ENCODE measurements at regions of chr6 and their contacts with region 1.

Region 1: DNA sequence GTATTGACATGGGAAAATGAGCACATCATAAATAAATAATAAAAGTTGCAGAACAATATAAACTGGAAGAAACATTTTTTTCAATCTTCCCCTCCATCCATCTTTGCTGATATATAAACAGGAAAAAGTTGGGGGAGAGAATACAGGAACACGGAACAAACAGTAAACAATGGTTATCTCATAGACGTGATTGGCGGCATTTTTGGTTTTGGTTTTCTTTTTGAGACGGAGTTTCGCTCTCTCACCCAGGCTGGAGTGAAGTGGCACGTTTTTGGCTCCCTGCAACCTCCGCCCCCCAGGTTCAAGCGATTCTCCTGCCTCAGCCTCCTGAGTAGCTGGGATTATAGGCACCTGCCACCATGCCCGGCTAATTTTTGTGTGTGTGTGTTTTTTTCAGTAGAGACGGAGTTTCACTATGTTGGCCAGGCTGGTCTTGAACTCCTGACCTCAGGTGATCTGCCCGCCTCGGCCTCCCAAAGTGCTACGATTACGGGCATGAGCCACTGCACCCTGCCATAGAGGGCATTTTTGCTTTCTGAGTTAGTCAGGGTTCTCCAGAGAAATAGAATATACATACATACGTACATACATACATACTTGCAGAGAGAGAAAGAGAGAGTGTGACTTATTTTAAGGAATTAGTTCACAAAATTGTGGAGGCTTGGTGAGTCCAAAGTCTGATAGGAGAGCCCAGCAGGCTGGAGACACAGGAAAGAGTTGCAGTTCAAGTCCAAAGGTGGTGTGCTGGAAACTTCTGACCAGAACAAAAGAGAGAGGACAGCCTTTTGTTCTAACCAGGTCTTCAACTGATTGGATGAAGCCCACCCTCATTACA is 22.6 kb downstream of the GNL1 start:
- DNase-seq: no peak
- H3K4me3 ChIP-seq: no peak overlapping the region
- H3K27me3 ChIP-seq: no peaks in the 10 kb centered on the region
- CTCF ChIP-seq: no peak

Region 2: DNA sequence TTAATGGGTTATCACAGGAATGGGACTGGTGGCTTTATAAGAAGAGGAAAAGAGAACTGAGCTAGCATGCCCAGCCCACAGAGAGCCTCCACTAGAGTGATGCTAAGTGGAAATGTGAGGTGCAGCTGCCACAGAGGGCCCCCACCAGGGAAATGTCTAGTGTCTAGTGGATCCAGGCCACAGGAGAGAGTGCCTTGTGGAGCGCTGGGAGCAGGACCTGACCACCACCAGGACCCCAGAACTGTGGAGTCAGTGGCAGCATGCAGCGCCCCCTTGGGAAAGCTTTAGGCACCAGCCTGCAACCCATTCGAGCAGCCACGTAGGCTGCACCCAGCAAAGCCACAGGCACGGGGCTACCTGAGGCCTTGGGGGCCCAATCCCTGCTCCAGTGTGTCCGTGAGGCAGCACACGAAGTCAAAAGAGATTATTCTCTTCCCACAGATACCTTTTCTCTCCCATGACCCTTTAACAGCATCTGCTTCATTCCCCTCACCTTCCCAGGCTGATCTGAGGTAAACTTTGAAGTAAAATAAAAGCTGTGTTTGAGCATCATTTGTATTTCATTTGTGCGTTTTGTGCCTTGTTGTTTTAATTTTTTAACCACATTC is 39.9 kb before region 1 on chr6:
- CTCF ChIA-PET with region 1: interaction called, 13 read pairs
- POLR2A ChIA-PET with region 1: no interaction called
- DNase-seq: no peak
- H3K4me3 ChIP-seq: no peak overlapping the region
- H3K27me3 ChIP-seq: no peaks in the 10 kb centered on the region
- CTCF ChIP-seq: peak; percentile 27

Region 3: GRCh38 chr6:30500421-30501355 is 33.0 kb before region 1 on chr6:
- CTCF ChIA-PET with region 1: interaction called, 11 read pairs
- POLR2A ChIA-PET with region 1: no interaction called
- DNase-seq: no peak
- H3K4me3 ChIP-seq: no peak overlapping the region
- H3K27me3 ChIP-seq: no peaks in the 10 kb centered on the region
- CTCF ChIP-seq: no peak

Measured in BJ (cell line).